ENCODE measurements at regions of chr1 and their contacts with region 1.

Region 1: GRCh38 chr1:171644805-171645483 is 7.5 kb downstream of the MYOC start:
- DNase-seq: peak; percentile 82 to 95 (median 84)
- H3K4me3 ChIP-seq: no peak overlapping the region
- H3K27ac ChIP-seq: peak overlapping the region in 4 of 5 donors; percentile 33 to 78 (median 57)
- H3K4me1 ChIP-seq: peaks cover 12 to 13% of the 10 kb centered on the region in 2 donors
- H3K27me3 ChIP-seq: no peaks in the 10 kb centered on the region
- CTCF ChIP-seq: peak; percentile 75 to 83 (median 80)
- POLR2A ChIP-seq: no peak

Region 2: DNA sequence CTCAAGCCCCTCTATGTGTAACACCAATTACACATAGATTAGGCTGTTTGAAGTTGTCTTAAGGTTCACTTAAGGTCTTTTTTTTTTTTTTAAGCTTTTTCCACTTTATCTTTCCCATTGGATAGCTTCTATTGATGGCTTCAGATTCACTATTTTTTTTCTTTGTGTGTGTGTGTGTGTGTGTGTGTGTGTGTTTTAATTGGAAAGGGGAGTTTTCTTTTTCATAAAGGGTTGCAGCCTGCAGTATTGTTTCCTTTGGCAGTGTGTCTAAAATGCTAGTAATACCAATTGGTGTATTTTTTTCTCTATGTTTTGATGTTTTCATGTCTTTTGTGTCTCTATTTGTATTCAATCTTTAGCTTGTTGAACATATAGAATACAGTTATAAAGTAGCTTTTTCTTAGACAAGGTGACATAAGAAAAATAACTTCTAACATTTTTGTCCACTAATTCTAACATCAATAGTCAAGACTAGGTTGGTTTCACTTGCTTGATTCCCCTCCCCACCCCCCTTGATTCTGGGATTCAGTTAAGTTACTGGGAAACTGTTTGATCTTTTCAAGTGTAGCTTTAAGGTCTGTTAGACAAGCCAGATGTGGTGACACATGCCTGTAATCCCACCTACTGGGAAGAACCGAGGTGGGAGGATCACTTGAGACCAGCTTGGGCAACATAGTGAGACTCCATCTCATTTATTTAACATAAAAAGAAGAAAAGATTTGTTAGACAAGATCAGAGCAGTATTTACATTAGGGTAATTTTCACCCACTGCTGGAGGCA is 138.2 kb before region 1 on chr1:
- intact Hi-C with region 1: no loop called
- DNase-seq: no peak
- H3K4me3 ChIP-seq: no peak overlapping the region
- H3K27ac ChIP-seq: no peak overlapping the region
- H3K4me1 ChIP-seq: peaks cover 8 to 44% of the 10 kb centered on the region in 2 donors
- H3K27me3 ChIP-seq: no peaks in the 10 kb centered on the region
- CTCF ChIP-seq: no peak
- POLR2A ChIP-seq: no peak

Region 3: DNA sequence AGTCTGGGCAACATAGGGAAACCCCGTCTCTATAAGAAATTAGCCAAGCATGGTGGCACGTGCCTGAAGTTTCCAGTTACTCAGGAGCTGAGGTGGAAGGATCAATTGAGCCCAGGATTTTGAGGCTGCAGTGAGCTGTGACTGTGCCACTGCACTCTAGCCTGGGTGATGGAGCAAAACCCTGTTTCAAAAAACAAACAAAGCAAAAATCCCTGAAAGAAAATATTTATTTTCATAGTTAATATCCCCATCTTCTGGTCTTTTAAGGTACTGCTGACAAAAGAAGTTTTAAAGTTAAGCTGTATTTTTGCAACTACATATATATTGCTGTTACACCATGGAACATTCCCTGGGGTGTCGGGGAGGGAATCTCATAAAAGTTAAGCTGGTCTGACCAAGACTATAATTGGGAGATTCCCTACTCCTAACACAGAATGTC is 70.9 kb after region 1 on chr1:
- intact Hi-C with region 1: loop called (anchors 5 to 10 kb)
- DNase-seq: no peak
- H3K4me3 ChIP-seq: no peak overlapping the region
- H3K27ac ChIP-seq: no peak overlapping the region
- H3K4me1 ChIP-seq: peaks cover 0 to 12% of the 10 kb centered on the region in 2 donors
- H3K27me3 ChIP-seq: no peaks in the 10 kb centered on the region
- CTCF ChIP-seq: peak; percentile 35 to 61 (median 52)
- POLR2A ChIP-seq: no peak

Region 4: GRCh38 chr1:171858696-171859095 is 213.8 kb after region 1 on chr1:
- intact Hi-C with region 1: no loop called
- DNase-seq: no peak
- H3K4me3 ChIP-seq: no peak overlapping the region
- H3K27ac ChIP-seq: no peak overlapping the region
- H3K4me1 ChIP-seq: peaks cover 0 to 6% of the 10 kb centered on the region in 2 donors
- H3K27me3 ChIP-seq: no peaks in the 10 kb centered on the region
- CTCF ChIP-seq: no peak
- POLR2A ChIP-seq: no peak